Testis (tissue), 5 donors: ENCODE measurements at regions of chr17 and their contacts with region 1.

Region 1: GRCh38 chr17:41648411-41649195 is 24.2 kb upstream of the KRT17 start:
- DNase-seq: peak; percentile 90
- H3K4me3 ChIP-seq: peak overlapping the region; percentile 21 to 24
- H3K27ac ChIP-seq: peak overlapping the region in 1 of 2 donors; percentile 72
- H3K4me1 ChIP-seq: peaks cover 19% of the 10 kb centered on the region
- H3K27me3 ChIP-seq: no peaks in the 10 kb centered on the region
- CTCF ChIP-seq: peak; percentile 84 to 98 (median 90)
- POLR2A ChIP-seq: no peak

Region 2: DNA sequence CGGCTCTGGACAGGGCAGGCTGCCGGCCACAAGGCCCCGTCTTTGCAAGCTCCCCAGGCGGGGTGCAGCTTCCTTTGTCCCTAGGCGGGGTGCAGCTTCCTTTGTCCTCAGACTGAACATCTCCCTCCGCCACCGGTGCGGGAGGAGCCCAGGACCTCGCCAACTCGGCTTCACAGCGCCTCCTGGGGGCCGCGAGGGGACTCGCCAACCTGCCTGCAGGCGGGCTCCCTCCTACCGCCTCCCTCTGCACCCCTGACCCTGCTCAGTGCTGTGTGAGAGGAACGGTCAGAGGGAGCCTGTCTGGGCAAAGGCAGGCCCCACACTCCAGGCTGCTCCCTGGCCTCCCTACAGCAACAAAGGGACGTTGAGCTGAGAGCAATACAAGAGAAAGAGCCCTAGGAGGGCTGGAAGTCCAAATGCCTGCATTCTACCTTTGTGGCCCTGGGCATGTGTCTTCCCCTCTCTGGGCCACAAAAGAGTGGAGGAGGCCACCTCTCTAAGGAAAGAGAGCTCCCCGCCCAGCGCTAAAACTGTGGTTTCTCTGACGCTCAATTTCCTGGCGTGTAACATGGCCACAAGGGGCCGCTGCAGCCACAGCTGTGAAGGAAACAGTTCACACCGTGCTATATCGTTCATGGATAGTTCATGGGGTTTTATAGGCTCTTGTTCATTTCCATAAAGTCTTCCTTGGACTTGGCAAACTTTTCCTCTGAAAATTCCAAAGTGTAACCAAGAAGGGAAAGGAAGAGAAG is 99.6 kb before region 1 on chr17:
- intact Hi-C with region 1: loop called (anchors 2 kb)
- DNase-seq: peak; percentile 92
- H3K4me3 ChIP-seq: peak overlapping the region; percentile 24 to 54
- H3K27ac ChIP-seq: peak overlapping the region; percentile 10 to 39
- H3K4me1 ChIP-seq: peaks cover 23% of the 10 kb centered on the region
- H3K27me3 ChIP-seq: no peaks in the 10 kb centered on the region
- CTCF ChIP-seq: peak; percentile 89 to 92 (median 91)
- POLR2A ChIP-seq: no peak

Region 3: DNA sequence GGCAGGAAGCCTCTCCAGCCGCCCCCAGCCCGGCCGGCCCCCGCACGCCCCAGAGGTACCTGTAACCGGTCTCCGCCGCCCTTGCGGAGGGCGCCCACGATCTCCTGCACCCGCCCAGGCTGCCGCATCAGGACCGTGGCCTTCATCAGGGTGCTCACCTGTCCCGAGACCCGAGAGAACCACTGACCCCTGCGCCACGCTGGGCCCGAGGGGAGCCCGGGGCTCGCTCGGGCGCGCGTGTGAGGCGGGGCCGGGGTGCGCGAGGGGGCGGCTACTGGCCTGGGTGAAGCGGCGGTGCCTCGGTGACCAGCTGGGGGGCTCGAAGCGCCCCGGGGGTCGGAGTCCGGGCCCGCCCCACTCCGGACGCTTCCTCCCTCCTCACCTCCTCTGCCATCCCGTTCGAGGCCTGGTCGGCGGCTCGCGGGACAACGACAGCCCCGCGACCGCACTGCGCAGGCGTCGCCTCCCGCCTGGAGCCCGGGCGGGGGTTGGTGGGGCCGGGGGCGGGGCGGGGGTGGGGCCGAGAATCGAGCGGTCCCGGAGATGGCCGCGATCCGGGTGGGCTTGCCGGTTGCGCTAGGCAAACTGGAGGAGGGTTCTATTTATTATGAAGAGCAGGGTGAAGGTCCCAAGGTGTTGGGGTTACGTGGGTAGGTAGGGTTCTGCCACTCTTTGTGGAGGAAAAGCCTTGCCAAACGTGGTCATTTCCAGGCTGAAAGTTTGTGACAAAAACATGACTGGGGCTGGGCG is 187.4 kb after region 1 on chr17 and contains the start of gene NT5C3B:
- intact Hi-C with region 1: no loop called
- DNase-seq: peak; percentile 61
- H3K4me3 ChIP-seq: peak within 1 kb of the TSS; percentile 61 to 97
- H3K27ac ChIP-seq: peak within 1 kb of the TSS; percentile 44 to 58
- H3K4me1 ChIP-seq: peaks cover 5% of the 10 kb centered on the region
- H3K27me3 ChIP-seq: no peaks in the 10 kb centered on the region
- CTCF ChIP-seq: no peak
- POLR2A ChIP-seq: no peak
- total RNA-seq, gene NT5C3B: 61.9 to 74.3 TPM